ENCODE measurements at regions of chr20 and their contacts with region 1.

Region 1: GRCh38 chr20:41738604-41739206 is 120.5 kb upstream of the CHD6 start:
- DNase-seq: peak; percentile 80
- H3K4me3 Mint-ChIP-seq: no peak overlapping the region
- H3K27ac Mint-ChIP-seq: no peak overlapping the region
- H3K4me1 Mint-ChIP-seq: no peaks in the 10 kb centered on the region
- H3K27me3 Mint-ChIP-seq: no peaks in the 10 kb centered on the region

Region 2: GRCh38 chr20:41693136-41693979 is 45.3 kb before region 1 on chr20:
- intact Hi-C with region 1: no loop called
- DNase-seq: peak; percentile 93
- H3K4me3 Mint-ChIP-seq: peak overlapping the region; percentile 91
- H3K27ac Mint-ChIP-seq: peak overlapping the region; percentile 97
- H3K4me1 Mint-ChIP-seq: peaks cover 20% of the 10 kb centered on the region
- H3K27me3 Mint-ChIP-seq: peaks cover 2% of the 10 kb centered on the region

Region 3: GRCh38 chr20:43187476-43188233 is 1449.0 kb after region 1 on chr20:
- intact Hi-C with region 1: loop called (anchors 5 kb)
- DNase-seq: peak; percentile 90
- H3K4me3 Mint-ChIP-seq: no peak overlapping the region
- H3K27ac Mint-ChIP-seq: no peak overlapping the region
- H3K4me1 Mint-ChIP-seq: peaks cover 4% of the 10 kb centered on the region
- H3K27me3 Mint-ChIP-seq: peaks cover 38% of the 10 kb centered on the region

Region 4: DNA sequence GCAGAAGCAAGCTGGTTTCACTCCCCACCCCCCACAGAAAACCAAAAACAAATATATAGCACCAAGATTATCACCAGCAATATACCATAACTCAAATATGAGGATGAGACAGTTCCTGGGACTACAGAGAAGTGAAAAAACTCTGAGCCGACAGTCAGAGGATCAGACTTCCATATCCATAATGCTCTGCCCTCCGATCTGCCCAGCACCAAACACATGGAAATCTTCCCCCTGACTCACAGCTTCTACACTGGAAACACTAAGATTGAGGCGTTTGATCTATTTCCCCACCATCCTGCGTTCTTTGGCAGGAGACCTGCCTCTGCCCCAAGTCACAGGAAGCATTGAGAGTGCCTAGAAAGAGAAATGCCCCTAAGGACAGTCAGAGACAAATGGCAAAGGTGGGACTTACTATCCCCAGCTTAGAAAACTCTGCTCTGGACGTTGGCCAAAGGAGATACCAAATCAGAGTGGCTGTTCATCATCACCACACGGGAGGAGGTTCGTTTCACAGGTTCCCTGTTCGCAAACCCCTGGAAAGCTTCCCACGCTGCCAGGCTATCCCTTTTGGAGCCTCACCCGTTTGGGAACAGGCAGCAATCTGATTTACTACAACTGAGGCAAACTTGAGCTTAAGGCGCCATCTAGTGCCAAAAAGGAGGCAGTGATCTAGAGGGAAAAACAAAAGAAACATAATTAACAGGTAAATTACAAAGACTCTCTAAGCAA is 1670.3 kb after region 1 on chr20:
- intact Hi-C with region 1: loop called (anchors 5 kb)
- DNase-seq: peak; percentile 67
- H3K4me3 Mint-ChIP-seq: no peak overlapping the region
- H3K27ac Mint-ChIP-seq: no peak overlapping the region
- H3K4me1 Mint-ChIP-seq: no peaks in the 10 kb centered on the region
- H3K27me3 Mint-ChIP-seq: peaks cover 25% of the 10 kb centered on the region

Measured in activated CD4-positive, alpha-beta T cell treated with anti-CD3 and anti-CD28 coated beads, Interleukin-2, amount 10 ng/mL, durations not matched to agents 24 days and 14 days (primary cell).